A549 (cell line): ENCODE measurements at regions of chr1 and their contacts with region 1.

Region 1: GRCh38 chr1:40404670-40405462 is 31.3 kb downstream of the SMAP2 start:
- DNase-seq: peak; percentile 13 to 54
- ATAC-seq: peak; percentile 43 to 63; a peak in 2 of 6 replicates
- H3K4me3 ChIP-seq: no peak overlapping the region
- H3K27ac ChIP-seq: no peak overlapping the region
- H3K4me1 ChIP-seq: no peaks in the 10 kb centered on the region
- CTCF ChIP-seq: peak; percentile 80
- EP300 ChIP-seq: no peak
- POLR2A ChIP-seq: no peak
- RAD21 ChIP-seq: peak; percentile 75 to 76

Region 2: DNA sequence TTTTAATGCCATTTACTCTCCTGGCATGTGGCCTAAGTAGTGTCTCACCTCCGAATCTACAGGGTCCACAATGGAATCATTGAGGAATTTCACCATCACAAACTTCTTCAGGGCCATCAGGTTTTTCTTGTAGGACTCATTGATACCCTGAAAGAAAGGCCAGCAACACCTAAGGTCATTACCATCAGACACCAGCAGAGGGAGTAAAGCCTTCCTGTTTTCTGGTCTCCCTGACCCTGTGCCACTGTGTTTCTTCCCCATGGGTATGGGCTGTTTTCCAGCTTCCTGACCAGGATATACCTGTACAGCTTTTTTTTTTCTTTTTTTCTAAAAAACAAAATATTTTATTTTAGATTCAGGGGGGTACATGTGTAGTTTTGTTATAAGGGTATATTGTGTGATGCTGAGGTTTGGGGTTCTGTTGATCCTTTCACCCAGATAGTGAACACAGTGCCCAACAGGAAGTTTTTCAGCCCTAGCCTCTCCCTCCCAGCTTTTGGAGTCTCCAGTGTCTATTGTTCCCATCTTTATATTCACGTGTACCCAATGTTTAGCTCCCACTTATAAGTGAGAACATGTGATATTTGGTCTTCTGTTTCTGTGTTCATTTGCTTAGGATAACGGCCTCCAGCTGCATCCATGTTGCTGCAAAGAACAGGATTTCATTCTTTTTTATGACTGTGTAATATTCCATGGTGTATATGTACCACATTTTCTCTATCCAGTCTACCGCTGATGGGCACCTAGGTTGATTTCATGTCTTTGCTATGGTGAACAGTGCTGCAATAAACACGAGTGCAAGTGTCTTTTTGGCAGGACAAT is 326.1 kb before region 1 on chr1:
- CTCF ChIA-PET with region 1: interaction called, 16 read pairs
- POLR2A ChIA-PET with region 1: no interaction called
- DNase-seq: peak; percentile 47 to 66
- ATAC-seq: peak; percentile 88 to 92
- H3K4me3 ChIP-seq: no peak overlapping the region
- H3K27ac ChIP-seq: no peak overlapping the region
- H3K4me1 ChIP-seq: peaks cover 4% of the 10 kb centered on the region; the same call in 1 of the 3 replicates
- CTCF ChIP-seq: peak; percentile 57
- EP300 ChIP-seq: no peak
- POLR2A ChIP-seq: no peak
- RAD21 ChIP-seq: peak; percentile 33 to 50; a peak in 4 of 5 replicates

Region 3: DNA sequence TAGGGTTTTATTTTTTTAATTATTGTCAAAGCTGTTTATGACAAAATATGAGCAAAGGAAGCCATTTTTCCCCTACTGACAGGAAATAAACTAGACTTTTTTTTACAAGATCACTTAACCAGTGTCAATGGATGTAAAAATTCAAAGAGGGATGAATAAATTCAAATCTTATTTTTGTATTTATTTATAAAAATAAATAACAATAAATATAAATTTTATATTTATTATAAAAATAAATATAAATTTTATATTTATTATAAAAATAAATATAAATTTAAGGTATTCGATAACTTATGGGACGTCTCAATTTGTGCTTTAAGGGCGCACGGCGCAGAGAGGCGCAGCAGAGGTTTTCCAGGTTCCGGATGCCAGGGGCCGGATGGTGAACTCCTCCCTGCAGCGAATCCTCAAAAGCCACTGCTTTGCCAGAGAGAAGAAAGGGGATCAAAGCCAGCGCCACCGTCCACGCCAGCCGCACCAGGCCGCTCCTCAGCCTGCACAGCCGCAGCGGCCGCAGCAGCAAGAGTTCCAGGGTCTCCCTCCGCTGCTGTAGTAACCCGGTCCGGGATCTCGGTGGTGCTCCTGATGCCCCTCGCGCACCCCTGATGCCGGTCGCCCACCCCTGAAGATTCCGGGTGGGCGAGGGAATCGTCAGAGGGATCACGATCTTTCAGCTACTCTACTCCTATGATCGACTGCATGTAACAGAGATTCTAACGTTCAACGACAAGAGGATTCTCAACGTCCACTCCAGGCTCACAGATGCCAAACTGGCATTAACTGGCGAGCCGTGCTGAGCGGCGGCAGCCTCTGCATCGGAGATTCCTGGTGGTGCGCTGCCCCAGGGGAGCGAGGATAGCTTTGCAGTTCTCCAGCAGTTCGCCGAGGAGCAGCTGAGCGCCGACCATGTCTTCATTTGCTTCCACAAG is 272.2 kb before region 1 on chr1:
- CTCF ChIA-PET with region 1: interaction called, 10 read pairs
- POLR2A ChIA-PET with region 1: no interaction called
- DNase-seq: no peak
- ATAC-seq: no peak
- H3K4me3 ChIP-seq: no peak overlapping the region
- H3K27ac ChIP-seq: no peak overlapping the region
- H3K4me1 ChIP-seq: no peaks in the 10 kb centered on the region
- CTCF ChIP-seq: no peak
- EP300 ChIP-seq: no peak
- POLR2A ChIP-seq: no peak
- RAD21 ChIP-seq: no peak

Region 4: GRCh38 chr1:40143891-40144575 is 260.8 kb before region 1 on chr1:
- CTCF ChIA-PET with region 1: interaction called, 22 read pairs
- POLR2A ChIA-PET with region 1: no interaction called
- DNase-seq: peak; percentile 36 to 65
- ATAC-seq: peak; percentile 87 to 89
- H3K4me3 ChIP-seq: no peak overlapping the region
- H3K27ac ChIP-seq: no peak overlapping the region
- H3K4me1 ChIP-seq: peaks cover 14% of the 10 kb centered on the region
- CTCF ChIP-seq: peak; percentile 70
- EP300 ChIP-seq: no peak
- POLR2A ChIP-seq: no peak
- RAD21 ChIP-seq: peak; percentile 73 to 74

Region 5: DNA sequence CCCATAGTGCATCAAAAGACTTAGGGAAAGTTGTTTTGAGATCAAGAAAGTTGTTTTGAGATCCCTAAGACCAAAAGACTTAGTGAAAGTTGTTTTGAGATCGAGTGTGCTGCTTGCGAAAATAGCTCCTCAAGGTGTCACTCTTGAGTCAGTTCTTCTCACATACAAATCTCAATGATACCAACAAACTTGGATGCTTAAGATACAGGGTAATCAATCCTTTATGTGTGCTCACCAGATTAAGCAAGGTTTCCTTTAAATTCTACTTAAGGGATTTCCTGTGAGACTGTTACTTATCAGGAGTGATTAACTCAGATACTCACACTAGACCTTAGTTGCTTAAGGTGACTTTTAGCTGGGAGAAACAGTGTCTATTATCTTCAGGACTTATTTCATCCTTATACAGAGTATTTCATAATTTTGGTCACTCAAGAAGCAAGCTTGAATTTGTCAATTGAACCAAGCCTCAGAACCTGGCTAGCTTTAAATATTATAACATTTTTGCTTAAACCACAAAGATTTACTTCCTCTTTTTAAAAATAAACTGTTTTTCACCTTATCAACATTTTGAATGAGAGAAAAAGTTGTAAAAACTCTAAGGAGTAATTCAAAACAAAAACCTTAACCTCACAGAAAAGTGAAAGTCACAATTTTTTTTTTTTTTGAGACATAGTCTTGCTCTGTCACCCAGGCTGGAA is 251.6 kb before region 1 on chr1:
- CTCF ChIA-PET with region 1: interaction called, 36 read pairs
- POLR2A ChIA-PET with region 1: no interaction called
- DNase-seq: peak in 1 of 2 experiments; percentile 61
- ATAC-seq: peak; percentile 43 to 66; a peak in 3 of 6 replicates
- H3K4me3 ChIP-seq: no peak overlapping the region
- H3K27ac ChIP-seq: no peak overlapping the region
- H3K4me1 ChIP-seq: no peaks in the 10 kb centered on the region
- CTCF ChIP-seq: peak; percentile 65
- EP300 ChIP-seq: no peak
- POLR2A ChIP-seq: no peak
- RAD21 ChIP-seq: peak; percentile 53 to 60; a peak in 4 of 5 replicates

Region 6: GRCh38 chr1:40305457-40305856 is 99.4 kb before region 1 on chr1:
- CTCF ChIA-PET with region 1: no interaction called
- POLR2A ChIA-PET with region 1: no interaction called
- DNase-seq: no peak
- ATAC-seq: peak in 1 of 2 experiments; percentile 70; a peak in 3 of 6 replicates
- H3K4me3 ChIP-seq: no peak overlapping the region
- H3K27ac ChIP-seq: no peak overlapping the region
- H3K4me1 ChIP-seq: no peaks in the 10 kb centered on the region
- CTCF ChIP-seq: no peak
- EP300 ChIP-seq: no peak
- POLR2A ChIP-seq: no peak
- RAD21 ChIP-seq: peak in 1 of 2 experiments; percentile 27; a peak in 1 of 5 replicates

Region 7: GRCh38 chr1:40385437-40386358 is 19.2 kb before region 1 on chr1:
- CTCF ChIA-PET with region 1: interaction called, 12 read pairs
- POLR2A ChIA-PET with region 1: no interaction called
- DNase-seq: no peak
- ATAC-seq: no peak
- H3K4me3 ChIP-seq: no peak overlapping the region
- H3K27ac ChIP-seq: no peak overlapping the region
- H3K4me1 ChIP-seq: peaks cover 17% of the 10 kb centered on the region; the same call in 2 of the 3 replicates
- CTCF ChIP-seq: no peak
- EP300 ChIP-seq: no peak
- POLR2A ChIP-seq: no peak
- RAD21 ChIP-seq: no peak

Region 8: DNA sequence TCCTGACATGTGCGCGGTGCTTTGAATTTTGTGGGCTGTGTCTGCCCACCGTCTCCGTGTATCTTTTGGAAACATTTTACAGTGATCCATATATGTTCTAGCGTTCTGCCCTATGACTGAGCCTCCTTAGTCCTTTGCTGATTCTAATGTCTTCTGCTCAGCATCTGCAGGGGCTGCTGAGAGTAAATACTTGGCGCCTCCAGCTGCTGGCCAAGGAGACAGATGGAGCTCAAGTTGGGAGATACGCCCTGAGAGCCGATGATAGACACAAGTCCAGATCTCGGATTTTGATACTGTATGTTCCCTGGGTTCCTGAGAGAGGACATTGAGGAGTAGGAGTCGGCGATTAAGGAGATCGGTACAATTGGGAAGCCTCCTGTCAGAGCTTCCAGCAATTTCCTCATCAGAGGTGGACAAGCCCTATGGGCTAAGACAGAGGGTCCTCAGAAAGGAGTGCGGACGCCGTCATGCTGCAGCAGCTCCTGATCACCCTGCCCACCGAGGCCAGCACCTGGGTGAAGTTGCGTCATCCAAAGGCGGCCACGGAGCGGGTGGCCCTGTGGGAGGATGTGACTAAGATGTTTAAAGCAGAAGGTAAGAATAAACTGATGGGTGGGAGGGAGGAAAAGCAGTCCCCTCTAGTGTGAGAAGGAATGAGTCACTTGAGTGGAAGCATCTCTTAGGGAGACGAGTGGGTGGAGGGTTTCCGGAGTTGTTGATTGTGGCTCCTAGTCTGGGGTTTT is 45.8 kb after region 1 on chr1:
- CTCF ChIA-PET with region 1: no interaction called
- POLR2A ChIA-PET with region 1: no interaction called
- DNase-seq: peak; percentile 6 to 19
- ATAC-seq: peak; percentile 55
- H3K4me3 ChIP-seq: peak overlapping the region; percentile 60
- H3K27ac ChIP-seq: peak overlapping the region; percentile 85 to 96
- H3K4me1 ChIP-seq: no peaks in the 10 kb centered on the region; the same call in 2 of the 3 replicates
- CTCF ChIP-seq: no peak
- EP300 ChIP-seq: no peak
- POLR2A ChIP-seq: no peak
- RAD21 ChIP-seq: no peak

Region 9: DNA sequence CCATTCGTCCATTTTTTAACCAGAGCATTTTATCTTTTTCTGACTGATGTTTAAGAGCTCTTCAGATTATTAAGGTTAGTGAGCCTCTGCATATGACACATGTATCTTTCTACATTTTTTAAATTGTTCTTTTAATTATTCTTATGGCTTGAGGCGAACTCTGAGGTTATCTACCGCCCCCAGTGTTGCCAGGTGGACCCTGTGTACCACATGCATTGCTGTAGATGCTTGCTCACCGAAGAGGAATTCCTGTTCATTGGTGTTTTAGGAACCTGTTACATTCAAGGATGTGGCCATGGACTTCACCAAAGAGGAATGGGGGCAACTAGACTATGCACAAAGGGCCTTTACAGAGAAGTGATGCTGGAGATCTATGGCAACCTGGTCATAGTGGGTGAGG is 158.4 kb after region 1 on chr1:
- CTCF ChIA-PET with region 1: no interaction called
- POLR2A ChIA-PET with region 1: no interaction called
- DNase-seq: no peak
- ATAC-seq: no peak
- H3K4me3 ChIP-seq: no peak overlapping the region
- H3K27ac ChIP-seq: no peak overlapping the region
- H3K4me1 ChIP-seq: no peaks in the 10 kb centered on the region
- CTCF ChIP-seq: no peak
- EP300 ChIP-seq: no peak
- POLR2A ChIP-seq: no peak
- RAD21 ChIP-seq: no peak